ENCODE measurements at regions of chrX and their contacts with region 1.

Region 1: DNA sequence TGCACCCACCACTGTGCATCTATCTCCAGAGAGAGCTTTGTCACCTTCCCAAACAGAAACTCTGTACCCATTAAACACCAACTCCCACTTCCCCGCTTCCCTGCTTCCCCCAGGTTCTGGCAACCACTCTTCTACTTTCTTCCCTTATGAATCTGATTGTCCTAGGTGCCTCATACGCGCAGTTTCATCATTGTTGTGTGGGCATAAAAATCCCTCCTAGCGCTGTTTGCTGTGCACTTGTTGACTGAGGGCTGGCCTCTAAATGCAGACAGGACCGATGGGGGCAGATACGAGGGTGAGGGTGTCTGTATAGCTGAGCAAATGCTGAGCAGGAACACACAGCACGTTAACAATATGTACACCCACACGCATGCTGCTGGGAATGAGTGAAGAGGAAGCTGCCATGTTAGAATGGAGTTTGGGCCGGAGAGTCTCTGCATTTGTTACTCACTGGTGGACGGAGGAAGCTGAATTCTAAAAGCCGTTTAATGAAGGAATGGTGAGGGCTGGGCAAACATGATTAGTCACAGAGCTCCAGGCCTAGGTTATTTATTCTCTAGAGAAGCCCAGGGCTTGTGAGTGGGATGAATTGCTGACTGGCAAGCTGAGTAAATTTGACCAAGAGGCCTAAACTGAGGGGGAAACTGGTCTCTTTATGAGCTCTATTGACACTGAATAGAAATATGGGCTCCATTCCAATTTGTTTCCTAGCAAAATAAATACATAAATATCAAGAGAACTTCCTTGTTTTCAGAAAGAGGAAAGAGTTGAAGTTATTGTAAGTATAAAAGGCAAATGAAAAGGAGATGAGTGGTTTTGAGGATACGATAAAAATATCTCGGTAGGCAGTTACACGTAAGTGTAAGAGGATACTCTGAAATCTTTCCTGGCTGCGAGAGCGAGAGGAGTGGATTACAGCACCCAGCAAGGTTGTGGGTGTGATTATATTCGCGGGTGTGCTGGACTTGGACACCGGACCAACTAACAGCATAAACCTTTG is 95.9 kb upstream of the RPS6KA3 start:
- DNase-seq: peak; percentile 93
- ATAC-seq: peak; percentile 90
- H3K4me3 ChIP-seq: peak overlapping the region; percentile 43 to 64 (median 45)
- H3K27ac ChIP-seq: peak overlapping the region; percentile 98
- H3K4me1 ChIP-seq: peaks cover 51% of the 10 kb centered on the region
- H3K27me3 ChIP-seq: no peaks in the 10 kb centered on the region
- CTCF ChIP-seq: no peak
- EP300 ChIP-seq: peak in 1 of 2 experiments; percentile 85; a peak in 3 of 4 replicates
- POLR2A ChIP-seq: peak; percentile 57 to 63; a peak in 2 of 4 replicates
- RAD21 ChIP-seq: no peak

Region 2: DNA sequence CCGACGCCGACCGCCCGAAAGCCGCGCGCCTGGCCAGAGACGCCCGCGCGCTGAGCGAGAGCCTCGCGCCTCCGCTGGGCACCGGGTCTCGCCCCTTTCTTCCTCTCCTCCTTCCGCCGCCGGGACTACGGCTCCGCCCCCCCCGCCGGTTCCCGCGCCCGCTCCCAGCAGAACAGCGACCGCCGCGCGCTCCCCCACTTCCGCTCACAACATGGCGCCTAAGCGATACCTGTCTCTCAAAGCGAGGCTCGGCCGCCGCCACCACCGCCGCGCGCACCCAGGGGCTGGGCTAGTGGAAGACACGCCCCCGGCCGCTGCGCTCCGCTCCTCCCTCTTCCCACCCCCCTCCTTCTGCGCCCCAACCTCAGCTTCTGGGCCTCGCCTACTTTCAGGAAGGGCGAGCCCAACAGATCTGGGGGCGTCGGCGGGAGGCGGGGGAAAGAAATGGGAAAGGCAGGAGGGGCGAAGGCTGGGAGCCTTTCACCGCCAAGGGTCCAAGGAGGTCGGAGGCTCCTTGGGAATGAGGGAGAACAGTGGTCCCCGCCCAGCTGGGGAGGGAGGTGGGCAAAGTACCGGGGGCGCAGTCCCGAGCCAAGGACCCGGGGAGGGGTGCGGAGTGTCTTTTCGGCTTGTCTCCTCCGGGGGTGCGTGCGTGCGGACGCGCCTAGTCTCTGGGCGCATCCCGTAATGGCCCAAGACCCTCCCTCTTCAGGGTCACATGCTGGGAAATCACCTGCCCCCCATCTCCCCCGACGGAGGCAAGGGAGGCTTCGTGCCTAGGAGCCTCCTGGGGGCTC is 95.6 kb before region 1 on chrX and contains the start of gene RPS6KA3:
- CTCF ChIA-PET with region 1: no interaction called
- POLR2A ChIA-PET with region 1: interaction called, 45 read pairs
- in situ Hi-C with region 1: loop called (anchors 10 kb)
- intact Hi-C with region 1: loop called (anchors 2 kb)
- DNase-seq: peak; percentile 71
- ATAC-seq: peak; percentile 85
- H3K4me3 ChIP-seq: peak within 1 kb of the TSS; percentile 72 to 93 (median 79)
- H3K27ac ChIP-seq: peak within 1 kb of the TSS; percentile 90
- H3K4me1 ChIP-seq: peaks cover 49% of the 10 kb centered on the region
- H3K27me3 ChIP-seq: no peaks in the 10 kb centered on the region; a peak in 1 of 5 replicates
- CTCF ChIP-seq: no peak
- EP300 ChIP-seq: no peak
- POLR2A ChIP-seq: peak; percentile 42 to 57; a peak in 3 of 4 replicates
- RAD21 ChIP-seq: no peak
- total RNA-seq, gene RPS6KA3: 357 and 581 TPM in 2 replicates

Region 3: DNA sequence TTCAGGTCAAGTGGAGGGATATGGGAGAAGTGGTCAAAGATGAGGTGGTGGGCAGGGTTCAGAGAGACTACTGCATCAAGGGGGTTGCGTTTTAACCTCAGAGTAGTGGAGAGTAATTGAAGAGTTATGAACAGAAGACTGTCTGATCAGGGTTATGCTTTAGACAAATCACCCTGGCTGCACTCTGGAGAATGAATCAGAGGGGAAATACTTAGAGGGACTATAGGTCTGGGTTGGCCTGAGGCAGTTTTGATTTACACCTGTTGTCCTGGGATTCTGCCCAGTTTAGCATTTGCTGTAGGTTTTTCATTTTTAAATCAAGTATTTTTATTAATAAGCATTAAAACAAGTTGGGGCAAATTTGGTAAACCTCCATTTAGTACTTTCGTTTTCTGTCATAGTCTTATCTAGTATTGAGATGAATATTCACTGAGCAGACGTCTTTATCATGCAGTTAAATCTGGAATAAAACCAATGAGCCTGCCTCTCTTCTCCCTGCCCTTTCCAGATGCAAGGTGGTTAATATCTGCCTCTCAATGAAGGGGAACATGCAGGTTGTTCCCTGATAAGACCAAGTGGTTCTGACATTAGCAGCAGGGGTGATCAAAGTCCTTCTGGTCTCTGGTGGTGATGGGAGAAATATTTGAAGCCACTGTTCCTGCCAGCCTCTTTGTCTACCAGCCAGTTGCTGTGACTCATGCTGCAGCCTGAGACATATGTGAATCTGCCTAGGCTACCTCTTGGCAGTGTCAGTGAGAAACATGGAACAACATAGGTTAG is 20.1 kb after region 1 on chrX:
- CTCF ChIA-PET with region 1: no interaction called
- POLR2A ChIA-PET with region 1: interaction called, 37 read pairs
- in situ Hi-C with region 1: no loop called
- intact Hi-C with region 1: loop called (anchors 1 kb)
- DNase-seq: peak; percentile 84
- ATAC-seq: peak; percentile 92
- H3K4me3 ChIP-seq: peak overlapping the region in 2 of 3 experiments; percentile 19 to 31; a peak in 2 of 6 replicates
- H3K27ac ChIP-seq: peak overlapping the region; percentile 73
- H3K4me1 ChIP-seq: peaks cover 59% of the 10 kb centered on the region
- H3K27me3 ChIP-seq: no peaks in the 10 kb centered on the region
- CTCF ChIP-seq: no peak
- EP300 ChIP-seq: no peak
- POLR2A ChIP-seq: no peak
- RAD21 ChIP-seq: no peak

Region 4: DNA sequence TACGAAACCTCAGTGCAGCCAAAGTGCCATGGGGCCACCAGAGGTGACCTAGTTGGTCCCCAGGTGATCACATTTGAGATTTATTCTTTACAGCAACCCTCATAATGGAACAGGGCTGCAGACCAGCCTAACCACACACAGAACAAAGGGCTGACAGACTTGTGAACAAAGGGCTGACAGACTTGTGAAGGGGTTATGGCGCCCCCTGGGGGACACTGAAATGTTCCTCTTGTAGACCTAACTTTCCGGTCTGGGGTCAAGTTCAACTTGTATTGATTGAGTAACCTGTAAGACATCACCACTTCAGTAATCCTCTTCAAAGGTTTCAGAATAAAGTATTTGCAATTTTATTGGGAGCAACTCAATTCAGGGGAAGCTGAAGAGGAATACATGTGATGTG is 80.0 kb after region 1 on chrX:
- CTCF ChIA-PET with region 1: no interaction called
- POLR2A ChIA-PET with region 1: interaction called, 34 read pairs
- in situ Hi-C with region 1: no loop called
- intact Hi-C with region 1: loop called (anchors 2 kb)
- DNase-seq: peak; percentile 76
- ATAC-seq: peak; percentile 88
- H3K4me3 ChIP-seq: no peak overlapping the region
- H3K27ac ChIP-seq: peak overlapping the region; percentile 46
- H3K4me1 ChIP-seq: peaks cover 63% of the 10 kb centered on the region
- H3K27me3 ChIP-seq: no peaks in the 10 kb centered on the region
- CTCF ChIP-seq: peak; percentile 72
- EP300 ChIP-seq: peak in 1 of 2 experiments; percentile 61; a peak in 2 of 4 replicates
- POLR2A ChIP-seq: no peak
- RAD21 ChIP-seq: peak; percentile 83

Region 5: GRCh38 chrX:20477836-20478524 is 115.4 kb after region 1 on chrX:
- CTCF ChIA-PET with region 1: no interaction called
- POLR2A ChIA-PET with region 1: interaction called, 27 read pairs
- in situ Hi-C with region 1: no loop called
- intact Hi-C with region 1: no loop called
- DNase-seq: no peak
- ATAC-seq: peak; percentile 37
- H3K4me3 ChIP-seq: no peak overlapping the region
- H3K27ac ChIP-seq: peak overlapping the region; percentile 92
- H3K4me1 ChIP-seq: peaks cover 98% of the 10 kb centered on the region
- H3K27me3 ChIP-seq: no peaks in the 10 kb centered on the region
- CTCF ChIP-seq: no peak
- EP300 ChIP-seq: no peak
- POLR2A ChIP-seq: no peak
- RAD21 ChIP-seq: no peak

Measured in HepG2 (cell line).